CD4-positive, alpha-beta T cell (primary cell): ENCODE measurements at regions of chr2 and their contacts with region 1.

Region 1: DNA sequence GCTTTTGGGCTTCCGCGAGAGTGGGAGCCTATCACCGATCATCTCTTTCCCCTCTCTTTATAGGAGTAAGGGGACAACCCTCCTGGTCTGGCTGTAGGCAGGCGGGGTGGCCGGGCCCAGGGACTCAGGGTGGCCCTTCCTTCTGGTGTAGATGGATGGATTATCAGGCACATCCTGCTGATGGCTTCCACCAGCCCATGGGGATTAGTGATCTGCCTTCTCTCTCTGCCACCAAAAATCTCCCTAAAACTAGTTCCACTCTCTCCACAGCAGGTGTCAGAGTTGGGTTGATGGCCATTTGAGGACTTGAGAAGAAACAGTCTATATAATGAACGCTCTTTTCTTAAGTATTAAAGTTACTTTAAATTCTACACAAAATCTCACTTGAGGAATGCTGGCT is 37.4 kb downstream of the NCK2 start:
- DNase-seq: peak in 3 of 14 experiments; percentile 42 to 73 (median 69)
- ATAC-seq: peak; percentile 56
- H3K4me3 ChIP-seq: no peak overlapping the region
- H3K4me3 Mint-ChIP-seq: peak overlapping the region; percentile 81
- H3K27ac ChIP-seq: peak overlapping the region in 1 of 2 donors; percentile 47
- H3K27ac Mint-ChIP-seq: peak overlapping the region; percentile 98
- H3K4me1 ChIP-seq: peaks cover 96% of the 10 kb centered on the region
- H3K4me1 Mint-ChIP-seq: peaks cover 97% of the 10 kb centered on the region
- H3K27me3 ChIP-seq: no peaks in the 10 kb centered on the region
- H3K27me3 Mint-ChIP-seq: no peaks in the 10 kb centered on the region
- CTCF ChIP-seq: peak; percentile 52

Region 2: GRCh38 chr2:105604938-105605337 is 177.2 kb before region 1 on chr2:
- CTCF ChIA-PET with region 1: no interaction called
- POLR2A ChIA-PET with region 1: no interaction called
- intact Hi-C with region 1: no loop called
- DNase-seq: no peak
- ATAC-seq: no peak
- H3K4me3 ChIP-seq: no peak overlapping the region
- H3K4me3 Mint-ChIP-seq: no peak overlapping the region
- H3K27ac ChIP-seq: no peak overlapping the region
- H3K27ac Mint-ChIP-seq: no peak overlapping the region
- H3K4me1 ChIP-seq: no peaks in the 10 kb centered on the region
- H3K4me1 Mint-ChIP-seq: no peaks in the 10 kb centered on the region
- H3K27me3 ChIP-seq: no peaks in the 10 kb centered on the region
- H3K27me3 Mint-ChIP-seq: no peaks in the 10 kb centered on the region
- CTCF ChIP-seq: no peak

Region 3: DNA sequence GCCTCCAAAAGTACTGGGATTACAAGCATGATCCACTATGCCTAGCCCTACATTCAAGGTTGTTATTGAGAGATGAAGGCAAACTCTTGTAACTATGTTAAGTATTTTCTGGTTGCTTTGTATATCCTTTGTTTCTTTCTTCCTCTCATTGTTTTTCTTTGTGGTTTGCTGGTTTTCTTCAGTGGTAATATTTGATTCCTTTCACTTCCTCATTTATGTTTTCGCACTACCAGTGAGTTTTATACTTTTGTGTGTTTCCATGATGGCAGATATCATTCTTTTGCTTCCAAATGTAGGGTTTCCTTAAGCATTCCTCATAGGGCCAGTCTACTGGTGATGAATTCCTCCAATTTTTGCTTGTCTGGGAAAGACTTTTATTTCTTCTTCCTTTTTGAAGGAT is 52.8 kb after region 1 on chr2:
- CTCF ChIA-PET with region 1: no interaction called
- POLR2A ChIA-PET with region 1: no interaction called
- intact Hi-C with region 1: no loop called
- DNase-seq: peak in 3 of 14 experiments; percentile 40 to 73 (median 40)
- ATAC-seq: peak; percentile 29
- H3K4me3 ChIP-seq: no peak overlapping the region
- H3K4me3 Mint-ChIP-seq: peak overlapping the region; percentile 30
- H3K27ac ChIP-seq: peak overlapping the region in 1 of 2 donors; percentile 41
- H3K27ac Mint-ChIP-seq: peak overlapping the region; percentile 73
- H3K4me1 ChIP-seq: peaks cover 40% of the 10 kb centered on the region
- H3K4me1 Mint-ChIP-seq: peaks cover 83% of the 10 kb centered on the region
- H3K27me3 ChIP-seq: no peaks in the 10 kb centered on the region
- H3K27me3 Mint-ChIP-seq: no peaks in the 10 kb centered on the region
- CTCF ChIP-seq: no peak

Region 4: DNA sequence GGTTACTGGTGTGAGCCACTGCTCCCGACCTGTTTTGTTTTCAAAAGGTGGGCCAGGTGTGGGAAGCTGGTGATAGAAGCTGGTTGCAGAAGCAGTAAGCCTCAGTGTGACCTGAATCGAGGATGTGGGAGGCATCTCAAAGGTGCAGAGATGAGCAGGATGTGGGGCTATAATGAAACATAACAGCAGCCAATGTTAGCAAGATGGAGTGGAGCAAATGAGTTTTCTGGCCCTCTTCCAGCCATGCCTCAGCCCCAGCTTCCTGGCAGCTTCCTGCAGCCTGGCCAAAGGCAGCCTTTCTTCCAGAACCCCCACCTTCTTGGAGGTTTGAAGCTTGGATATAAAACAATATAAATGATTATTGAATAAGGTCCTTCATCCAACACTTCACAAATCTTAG is 147.4 kb after region 1 on chr2:
- CTCF ChIA-PET with region 1: no interaction called
- POLR2A ChIA-PET with region 1: interaction called, 9 read pairs
- intact Hi-C with region 1: loop called in 1 of 2 experiments (anchors 5 kb)
- DNase-seq: peak; percentile 8 to 89 (median 52)
- ATAC-seq: peak; percentile 82
- H3K4me3 ChIP-seq: no peak overlapping the region
- H3K4me3 Mint-ChIP-seq: peak overlapping the region; percentile 47
- H3K27ac ChIP-seq: peak overlapping the region; percentile 19 to 42
- H3K27ac Mint-ChIP-seq: peak overlapping the region; percentile 81
- H3K4me1 ChIP-seq: peaks cover 95% of the 10 kb centered on the region
- H3K4me1 Mint-ChIP-seq: peaks cover 62% of the 10 kb centered on the region
- H3K27me3 ChIP-seq: no peaks in the 10 kb centered on the region
- H3K27me3 Mint-ChIP-seq: no peaks in the 10 kb centered on the region
- CTCF ChIP-seq: no peak